OCI-LY7 (cell line): ENCODE measurements at regions of chr20 and their contacts with region 1.

Region 1: DNA sequence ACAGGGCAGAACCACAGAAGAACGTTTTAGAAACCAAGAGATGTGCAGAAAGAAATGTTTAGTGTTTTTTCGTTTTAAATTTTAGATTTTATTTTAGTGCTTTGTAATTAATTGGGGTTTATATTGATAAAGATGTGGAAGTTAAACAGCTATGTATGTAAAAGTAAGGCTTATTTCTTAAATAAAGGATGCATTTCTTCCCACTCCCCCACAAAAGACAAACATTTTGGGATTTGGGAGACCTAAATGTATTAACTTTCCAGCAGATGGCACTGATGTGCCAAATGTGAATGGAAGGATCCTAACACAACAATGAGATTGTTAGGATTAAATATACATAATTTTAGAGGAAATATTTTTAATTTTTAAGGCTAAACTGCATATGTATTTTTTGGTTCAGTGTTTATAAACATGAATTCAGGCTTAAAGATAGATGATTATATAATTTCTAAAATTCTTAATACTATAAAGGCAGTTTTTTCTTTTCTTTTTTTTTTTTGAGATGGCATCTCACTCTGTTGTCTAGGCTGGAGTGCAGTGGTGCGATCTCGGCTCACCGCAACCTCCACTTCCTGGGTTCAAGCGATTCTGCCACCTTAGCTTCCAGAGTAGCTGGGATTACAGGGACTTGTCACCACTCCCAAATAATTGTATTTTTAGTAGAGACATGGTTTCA is 12.0 kb downstream of the PFDN4 start:
- DNase-seq: peak; percentile 21
- H3K4me3 ChIP-seq: no peak overlapping the region
- H3K27ac ChIP-seq: no peak overlapping the region
- H3K4me1 ChIP-seq: no peaks in the 10 kb centered on the region
- CTCF ChIP-seq: peak; percentile 80

Region 2: GRCh38 chr20:53399592-53400259 is 820.2 kb before region 1 on chr20:
- CTCF ChIA-PET with region 1: interaction called, 24 read pairs
- POLR2A ChIA-PET with region 1: no interaction called
- intact Hi-C with region 1: no loop called
- DNase-seq: no peak
- H3K4me3 ChIP-seq: no peak overlapping the region
- H3K27ac ChIP-seq: no peak overlapping the region
- H3K4me1 ChIP-seq: no peaks in the 10 kb centered on the region
- CTCF ChIP-seq: no peak

Region 3: DNA sequence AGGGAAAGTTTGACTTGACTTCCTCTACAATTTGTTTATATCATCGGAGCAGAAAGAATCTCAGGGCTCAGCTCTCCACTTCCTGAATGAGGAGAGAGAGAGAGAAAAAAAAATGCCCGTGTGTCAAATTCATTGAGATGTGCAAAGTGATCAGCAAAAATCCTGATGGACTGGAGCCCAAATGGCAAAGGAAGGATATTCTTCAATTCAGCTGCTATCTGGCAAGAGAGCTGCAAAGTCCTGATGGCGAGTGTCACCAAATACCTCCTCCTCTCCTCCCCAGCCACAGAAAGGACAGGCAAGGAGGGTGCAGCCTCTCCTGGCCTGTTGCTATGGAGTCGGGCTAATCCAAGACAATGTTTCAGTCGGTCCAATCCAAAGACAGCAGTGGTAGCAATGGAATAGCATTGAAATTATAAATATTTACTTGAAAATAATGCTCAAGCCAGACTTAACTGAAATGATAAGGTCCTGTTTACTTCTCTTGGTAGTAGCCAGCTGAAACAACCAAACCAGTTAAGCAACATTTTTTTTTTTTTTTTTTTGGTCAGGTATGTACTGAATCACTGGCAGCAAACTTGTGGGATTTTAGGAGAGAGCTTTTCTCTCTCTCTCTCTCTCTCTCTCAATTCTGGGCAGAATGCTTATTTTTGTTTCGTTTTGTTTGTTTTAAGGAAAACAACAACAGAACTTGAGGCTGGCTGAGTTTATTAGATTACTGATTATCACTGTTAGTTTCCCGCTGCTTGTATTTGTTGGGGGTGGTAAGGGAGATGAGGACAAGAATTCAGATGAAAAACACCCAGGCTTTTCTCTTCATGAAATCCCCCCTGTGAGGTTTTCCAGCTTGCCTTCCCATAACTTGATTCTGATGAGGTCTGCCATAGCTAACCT is 353.7 kb before region 1 on chr20:
- CTCF ChIA-PET with region 1: no interaction called
- POLR2A ChIA-PET with region 1: no interaction called
- intact Hi-C with region 1: no loop called
- DNase-seq: peak; percentile 71
- H3K4me3 ChIP-seq: peak overlapping the region; percentile 62
- H3K27ac ChIP-seq: peak overlapping the region; percentile 97
- H3K4me1 ChIP-seq: peaks cover 68% of the 10 kb centered on the region
- CTCF ChIP-seq: no peak

Region 4: DNA sequence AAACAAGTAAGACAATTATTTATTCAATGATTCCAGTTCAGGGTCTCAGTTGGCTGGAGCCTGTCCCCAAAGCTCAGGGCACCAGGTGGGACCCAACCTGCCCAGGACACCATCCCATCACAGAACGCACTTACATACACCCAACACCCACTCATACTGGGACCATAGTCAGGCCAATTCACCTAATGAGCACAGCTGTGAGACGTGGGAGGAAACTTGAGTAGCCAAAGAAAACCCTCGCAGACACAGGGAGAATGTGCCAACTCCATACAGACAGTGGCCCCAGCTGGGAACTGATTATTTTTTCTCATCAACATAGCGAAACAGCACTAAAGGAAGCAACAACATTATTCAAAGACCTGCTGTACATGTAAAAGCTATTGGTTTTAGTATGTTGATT is 196.9 kb after region 1 on chr20:
- CTCF ChIA-PET with region 1: no interaction called
- POLR2A ChIA-PET with region 1: no interaction called
- intact Hi-C with region 1: no loop called
- DNase-seq: no peak
- H3K4me3 ChIP-seq: no peak overlapping the region
- H3K27ac ChIP-seq: no peak overlapping the region
- H3K4me1 ChIP-seq: no peaks in the 10 kb centered on the region
- CTCF ChIP-seq: no peak

Region 5: GRCh38 chr20:54649511-54649962 is 429.6 kb after region 1 on chr20:
- CTCF ChIA-PET with region 1: no interaction called
- POLR2A ChIA-PET with region 1: no interaction called
- intact Hi-C with region 1: loop called (anchors 5 kb)
- DNase-seq: peak; percentile 66
- H3K4me3 ChIP-seq: no peak overlapping the region
- H3K27ac ChIP-seq: no peak overlapping the region
- H3K4me1 ChIP-seq: no peaks in the 10 kb centered on the region
- CTCF ChIP-seq: peak; percentile 91